ENCODE measurements at regions of chr10 and their contacts with region 1.

Region 1: DNA sequence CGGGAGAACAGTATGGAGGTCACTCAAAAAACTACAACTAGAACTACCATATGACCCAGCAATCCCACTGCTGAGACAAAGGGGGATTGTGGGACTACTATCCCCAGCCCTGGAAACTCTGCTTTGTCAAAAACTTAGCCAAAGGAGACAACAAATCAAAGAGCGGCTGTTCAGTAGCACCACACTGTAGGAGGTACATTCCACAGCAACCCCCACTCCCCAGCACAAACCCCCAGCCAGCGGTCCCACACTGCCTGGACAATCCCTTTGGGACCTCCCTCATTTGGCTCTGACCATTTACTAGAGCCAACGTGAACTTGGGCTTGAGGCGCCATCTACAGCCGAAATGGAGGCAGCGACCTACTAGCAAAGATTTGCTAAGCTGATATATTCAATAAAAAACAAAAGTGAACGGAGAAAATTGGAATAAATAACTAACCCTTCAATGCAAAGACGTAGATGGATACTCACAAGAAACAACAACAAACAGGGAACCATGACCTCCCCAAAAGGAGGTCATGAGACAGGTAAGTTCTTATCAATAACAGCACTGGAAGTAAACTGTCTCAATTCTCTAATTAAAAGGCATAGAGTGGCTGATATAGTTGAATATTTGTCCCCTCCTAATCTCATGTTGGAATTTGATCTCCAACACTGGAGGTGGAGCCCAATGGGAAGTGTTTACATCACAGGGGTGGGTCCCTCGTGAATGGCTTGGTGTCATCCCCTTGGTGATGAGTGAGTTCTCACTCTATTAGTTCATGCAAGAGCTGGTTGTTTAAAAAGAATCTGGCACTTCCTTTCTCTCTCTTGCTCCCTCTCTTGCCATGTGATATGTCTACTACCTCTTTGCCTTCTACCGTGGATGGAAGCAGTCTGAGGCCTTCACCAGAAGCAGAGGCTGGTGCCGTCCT is 119.0 kb upstream of the KCNMA1 start:
- DNase-seq: peak; percentile 56 to 76
- H3K4me3 ChIP-seq: peak overlapping the region in 1 of 4 experiments; percentile 31; a peak in 1 of 8 replicates
- H3K27ac ChIP-seq: no peak overlapping the region; the same call in 1 of the 2 replicates
- H3K4me1 ChIP-seq: peaks cover 0 to 3% (median 0%) of the 10 kb centered on the region in 4 experiments; a peak in 2 of 7 replicates
- H3K27me3 ChIP-seq: no peaks in the 10 kb centered on the region
- CTCF ChIP-seq: peak; percentile 67 to 87 (median 84)
- EP300 ChIP-seq: no peak
- POLR2A ChIP-seq: no peak
- RAD21 ChIP-seq: peak; percentile 89 to 95

Region 2: DNA sequence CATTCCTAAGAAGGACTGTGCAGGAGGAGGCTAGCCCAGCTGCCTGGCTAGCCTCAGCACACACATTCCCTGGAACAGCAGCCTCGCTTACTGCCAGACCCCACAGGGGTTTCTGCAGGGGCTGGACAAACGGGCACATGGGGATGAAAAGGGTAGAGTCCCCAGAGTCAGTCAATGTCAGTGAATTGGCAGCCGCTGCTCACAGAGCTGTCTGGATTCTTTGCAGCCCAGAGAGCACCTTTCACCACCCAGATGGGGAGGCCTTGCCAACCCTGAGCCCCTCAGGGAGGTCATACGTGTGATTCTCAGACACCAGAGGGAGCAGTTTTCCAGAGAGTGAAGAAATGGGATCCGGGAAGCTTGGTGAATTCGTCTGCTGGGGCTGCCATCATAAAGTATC is 262.2 kb before region 1 on chr10:
- CTCF ChIA-PET with region 1: no interaction called
- POLR2A ChIA-PET with region 1: no interaction called
- DNase-seq: no peak
- H3K4me3 ChIP-seq: no peak overlapping the region
- H3K27ac ChIP-seq: no peak overlapping the region
- H3K4me1 ChIP-seq: peaks cover 2 to 4% (median 3%) of the 10 kb centered on the region in 4 experiments; a peak in 3 of 7 replicates
- H3K27me3 ChIP-seq: no peaks in the 10 kb centered on the region
- CTCF ChIP-seq: peak; percentile 53 to 67 (median 66)
- EP300 ChIP-seq: no peak
- POLR2A ChIP-seq: no peak
- RAD21 ChIP-seq: peak; percentile 76 to 79

Region 3: GRCh38 chr10:77716482-77717317 is 39.9 kb before region 1 on chr10:
- CTCF ChIA-PET with region 1: interaction called, 45 read pairs
- POLR2A ChIA-PET with region 1: no interaction called
- DNase-seq: no peak
- H3K4me3 ChIP-seq: no peak overlapping the region
- H3K27ac ChIP-seq: no peak overlapping the region
- H3K4me1 ChIP-seq: peaks cover 0 to 10% (median 5%) of the 10 kb centered on the region in 4 experiments; a peak in 5 of 7 replicates
- H3K27me3 ChIP-seq: peaks cover 0 to 2% (median 0%) of the 10 kb centered on the region in 4 experiments; a peak in 4 of 7 replicates
- CTCF ChIP-seq: no peak
- EP300 ChIP-seq: no peak
- POLR2A ChIP-seq: no peak
- RAD21 ChIP-seq: no peak

Region 4: DNA sequence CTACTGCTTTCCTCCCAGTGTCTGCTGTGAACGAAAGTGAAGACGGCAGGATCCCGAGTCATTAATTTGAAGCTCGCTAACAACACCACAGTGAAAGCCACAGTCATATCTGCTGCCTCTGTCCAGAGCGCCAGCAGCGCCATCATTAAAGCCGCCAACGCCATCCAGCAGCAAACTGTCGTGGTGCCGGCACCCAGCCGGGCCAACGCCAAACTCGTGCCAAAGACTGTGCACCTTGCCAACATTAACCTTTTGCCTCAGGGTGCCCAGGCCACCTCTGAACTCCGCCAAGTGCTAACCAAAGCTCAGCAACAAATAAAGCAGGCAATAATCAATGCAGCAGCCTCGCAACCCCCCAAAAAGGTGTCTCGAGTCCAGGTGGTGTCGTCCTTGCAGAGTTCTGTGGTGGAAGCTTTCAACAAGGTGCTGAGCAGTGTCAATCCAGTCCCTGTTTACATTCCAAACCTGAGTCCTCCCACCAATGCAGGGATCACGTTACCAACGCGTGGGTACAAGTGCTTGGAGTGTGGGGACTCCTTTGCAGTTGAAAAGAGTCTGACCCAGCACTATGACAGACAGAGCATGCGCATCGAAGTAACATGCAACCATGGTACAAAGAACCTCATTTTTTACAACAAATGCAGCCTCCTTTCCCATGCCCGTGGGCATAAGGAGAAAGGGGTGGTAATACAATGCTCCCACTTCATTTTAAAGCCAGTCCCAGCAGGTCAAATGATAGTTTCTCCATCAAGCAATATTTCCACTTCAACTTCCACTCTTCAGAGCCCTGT is 24.2 kb before region 1 on chr10:
- CTCF ChIA-PET with region 1: no interaction called
- POLR2A ChIA-PET with region 1: no interaction called
- DNase-seq: no peak
- H3K4me3 ChIP-seq: no peak overlapping the region
- H3K27ac ChIP-seq: no peak overlapping the region
- H3K4me1 ChIP-seq: no peaks in the 10 kb centered on the region
- H3K27me3 ChIP-seq: no peaks in the 10 kb centered on the region
- CTCF ChIP-seq: no peak
- EP300 ChIP-seq: no peak
- POLR2A ChIP-seq: no peak
- RAD21 ChIP-seq: no peak

Region 5: DNA sequence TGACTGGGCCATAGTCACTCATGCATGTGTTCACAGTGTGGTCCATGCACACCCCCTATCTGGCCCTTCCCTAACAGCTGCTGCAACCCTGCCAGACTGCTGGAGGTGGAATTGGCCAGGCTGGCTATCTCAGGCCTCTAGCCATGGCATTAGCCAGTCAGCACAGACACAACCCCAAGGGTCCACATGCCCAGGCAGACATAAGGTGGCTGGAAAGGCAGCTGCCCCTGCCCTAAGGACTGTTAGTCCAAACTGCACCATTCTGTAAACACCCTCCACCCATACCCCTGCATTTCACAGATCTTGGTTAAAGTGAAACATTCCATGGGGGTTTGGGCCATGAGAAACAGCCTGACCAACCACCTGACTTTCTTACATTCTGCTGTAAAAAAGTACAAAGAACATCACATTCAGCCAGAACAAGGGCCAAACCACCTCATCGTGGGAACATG is 18.4 kb after region 1 on chr10:
- CTCF ChIA-PET with region 1: interaction called, 20 read pairs
- POLR2A ChIA-PET with region 1: interaction called, 3 read pairs
- DNase-seq: peak in 1 of 2 experiments; percentile 37
- H3K4me3 ChIP-seq: no peak overlapping the region
- H3K27ac ChIP-seq: no peak overlapping the region
- H3K4me1 ChIP-seq: no peaks in the 10 kb centered on the region
- H3K27me3 ChIP-seq: no peaks in the 10 kb centered on the region
- CTCF ChIP-seq: no peak
- EP300 ChIP-seq: no peak
- POLR2A ChIP-seq: no peak
- RAD21 ChIP-seq: no peak

Region 6: DNA sequence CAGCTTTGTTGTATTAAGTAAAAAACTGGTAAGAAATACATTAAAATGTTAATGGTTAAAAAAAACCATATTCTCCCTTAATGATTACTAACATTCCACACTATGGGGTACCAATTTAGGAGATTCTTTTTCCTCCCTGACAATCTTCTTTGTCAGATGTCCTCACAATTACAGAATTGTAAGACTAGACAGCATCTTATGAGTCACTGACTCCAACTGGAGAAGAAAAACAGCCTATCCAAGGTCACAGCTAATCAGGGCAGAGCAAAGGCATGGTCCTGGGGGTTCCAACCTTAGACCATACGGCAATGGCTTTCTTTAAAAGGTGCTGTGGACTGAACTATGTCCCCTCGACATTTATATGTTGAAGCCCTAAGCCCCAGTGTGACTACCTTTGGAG is 42.4 kb after region 1 on chr10:
- CTCF ChIA-PET with region 1: no interaction called
- POLR2A ChIA-PET with region 1: no interaction called
- DNase-seq: no peak
- H3K4me3 ChIP-seq: no peak overlapping the region
- H3K27ac ChIP-seq: no peak overlapping the region
- H3K4me1 ChIP-seq: peaks cover 4 to 14% (median 8%) of the 10 kb centered on the region in 4 experiments; a peak in 5 of 7 replicates
- H3K27me3 ChIP-seq: no peaks in the 10 kb centered on the region
- CTCF ChIP-seq: no peak
- EP300 ChIP-seq: no peak
- POLR2A ChIP-seq: no peak
- RAD21 ChIP-seq: no peak